ENCODE measurements at regions of chr10 and their contacts with region 1.

Region 1: GRCh38 chr10:43299579-43299978 is 32.7 kb upstream of the RASGEF1A start:
- DNase-seq: no peak
- ATAC-seq: no peak
- H3K4me3 ChIP-seq: no peak overlapping the region
- H3K27ac ChIP-seq: no peak overlapping the region
- H3K4me1 ChIP-seq: peaks cover 0 to 3% (median 0%) of the 10 kb centered on the region in 3 donors
- H3K27me3 ChIP-seq: no peaks in the 10 kb centered on the region
- CTCF ChIP-seq: no peak

Region 2: DNA sequence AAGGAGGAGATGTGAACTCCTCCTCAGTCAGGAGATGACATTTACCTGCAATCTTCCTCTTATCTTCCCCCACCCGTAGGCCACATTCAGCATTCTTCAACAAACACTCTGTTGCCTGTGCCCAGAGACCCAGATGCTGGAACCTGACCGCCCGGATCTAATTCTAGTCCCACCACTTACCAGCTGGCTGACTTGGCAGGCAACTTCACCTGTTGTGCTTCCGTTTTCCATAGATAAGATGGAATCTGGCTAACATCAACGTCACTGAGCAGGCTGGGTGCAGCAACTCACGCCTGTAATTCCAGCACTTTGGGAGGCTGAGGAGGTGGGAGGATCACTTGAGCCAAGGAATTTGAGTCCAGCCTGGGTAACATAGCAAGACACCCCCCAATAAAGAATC is 50.6 kb after region 1 on chr10:
- intact Hi-C with region 1: loop called in 1 of 3 experiments (anchors 5 kb)
- DNase-seq: peak in 3 of 6 donors; percentile 15 to 32 (median 21)
- ATAC-seq: peak in 3 of 4 donors; percentile 35 to 57 (median 46)
- H3K4me3 ChIP-seq: no peak overlapping the region
- H3K27ac ChIP-seq: no peak overlapping the region
- H3K4me1 ChIP-seq: no peaks in the 10 kb centered on the region
- H3K27me3 ChIP-seq: no peaks in the 10 kb centered on the region
- CTCF ChIP-seq: no peak